HEK293 (cell line): ENCODE measurements at regions of chr2 and their contacts with region 1.

Region 1: DNA sequence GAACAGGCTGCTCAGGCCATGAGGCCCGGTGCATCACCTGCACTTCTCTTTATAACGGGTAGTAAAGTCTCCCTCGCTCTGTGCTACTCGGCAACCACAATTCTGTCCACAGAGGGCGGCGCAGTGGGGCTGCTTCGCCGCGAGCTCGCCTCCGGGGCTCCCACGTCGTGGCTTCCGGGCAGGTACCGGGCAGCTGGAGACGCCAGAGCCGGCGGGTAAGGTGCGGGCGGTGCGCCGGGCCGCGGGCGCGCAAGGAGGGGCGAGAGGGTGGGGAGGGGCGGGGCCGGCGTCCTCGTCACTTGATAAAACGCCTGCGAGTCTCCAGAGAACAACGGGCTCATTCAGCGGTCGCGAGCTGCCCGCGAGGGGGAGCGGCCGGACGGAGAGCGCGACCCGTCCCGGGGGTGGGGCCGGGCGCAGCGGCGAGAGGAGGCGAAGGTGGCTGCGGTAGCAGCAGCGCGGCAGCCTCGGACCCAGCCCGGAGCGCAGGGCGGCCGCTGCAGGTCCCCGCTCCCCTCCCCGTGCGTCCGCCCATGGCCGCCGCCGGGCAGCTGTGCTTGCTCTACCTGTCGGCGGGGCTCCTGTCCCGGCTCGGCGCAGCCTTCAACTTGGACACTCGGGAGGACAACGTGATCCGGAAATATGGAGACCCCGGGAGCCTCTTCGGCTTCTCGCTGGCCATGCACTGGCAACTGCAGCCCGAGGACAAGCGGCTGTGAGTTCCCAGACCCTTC is at the start of gene ITGA6:
- H3K4me3 ChIP-seq: peak within 1 kb of the TSS; percentile 77
- H3K27ac ChIP-seq: peak within 1 kb of the TSS; percentile 88
- H3K4me1 ChIP-seq: peaks cover 8% of the 10 kb centered on the region; the same call in 1 of the 2 replicates
- CTCF ChIP-seq: peak; percentile 56; the same call in 1 of the 2 replicates

Region 2: DNA sequence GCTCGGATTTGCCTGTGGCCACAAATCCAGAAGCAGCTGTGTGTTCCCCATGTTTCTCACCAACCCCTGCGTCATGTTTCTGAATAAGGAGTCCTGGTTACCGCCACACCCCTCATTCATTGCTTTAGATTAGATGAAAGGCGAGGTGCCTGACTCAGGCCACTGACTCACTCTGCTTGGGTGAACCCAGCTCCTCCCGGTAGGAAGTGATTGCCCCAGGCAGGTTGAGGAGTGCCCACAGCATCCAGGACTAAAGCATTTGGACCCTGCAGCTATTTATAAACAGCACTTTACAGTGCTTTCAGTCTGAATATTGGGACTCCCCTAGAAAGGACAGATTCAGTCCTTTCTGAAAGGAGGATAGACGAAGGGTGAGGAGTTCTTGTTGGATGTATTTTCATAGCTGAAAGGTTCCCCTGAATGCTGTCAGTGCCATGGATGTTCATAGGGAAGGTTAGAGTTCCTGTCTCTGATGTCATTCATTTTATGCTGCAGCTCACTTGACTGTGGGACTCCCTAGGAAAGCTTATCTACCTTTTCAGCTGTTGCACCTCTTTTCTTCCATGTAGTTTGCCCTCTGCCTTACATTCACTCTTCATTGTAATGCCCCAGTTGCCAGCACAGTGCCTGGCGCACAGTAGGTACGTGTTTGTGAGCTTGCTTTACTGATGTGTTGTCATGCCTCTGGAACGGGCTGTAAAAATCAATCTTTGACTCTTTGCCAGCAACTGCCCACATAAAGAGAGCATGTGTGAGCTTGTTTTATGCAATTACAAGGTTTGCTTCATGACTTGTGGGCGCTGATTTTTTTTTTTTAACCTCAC is 14.9 kb after region 1 on chr2:
- CTCF ChIA-PET with region 1: interaction called, 15 read pairs
- POLR2A ChIA-PET with region 1: interaction called, 48 read pairs
- H3K4me3 ChIP-seq: no peak overlapping the region
- H3K27ac ChIP-seq: no peak overlapping the region
- H3K4me1 ChIP-seq: peaks cover 27% of the 10 kb centered on the region
- CTCF ChIP-seq: no peak